ENCODE measurements at regions of chr4 and their contacts with region 1.

Region 1: DNA sequence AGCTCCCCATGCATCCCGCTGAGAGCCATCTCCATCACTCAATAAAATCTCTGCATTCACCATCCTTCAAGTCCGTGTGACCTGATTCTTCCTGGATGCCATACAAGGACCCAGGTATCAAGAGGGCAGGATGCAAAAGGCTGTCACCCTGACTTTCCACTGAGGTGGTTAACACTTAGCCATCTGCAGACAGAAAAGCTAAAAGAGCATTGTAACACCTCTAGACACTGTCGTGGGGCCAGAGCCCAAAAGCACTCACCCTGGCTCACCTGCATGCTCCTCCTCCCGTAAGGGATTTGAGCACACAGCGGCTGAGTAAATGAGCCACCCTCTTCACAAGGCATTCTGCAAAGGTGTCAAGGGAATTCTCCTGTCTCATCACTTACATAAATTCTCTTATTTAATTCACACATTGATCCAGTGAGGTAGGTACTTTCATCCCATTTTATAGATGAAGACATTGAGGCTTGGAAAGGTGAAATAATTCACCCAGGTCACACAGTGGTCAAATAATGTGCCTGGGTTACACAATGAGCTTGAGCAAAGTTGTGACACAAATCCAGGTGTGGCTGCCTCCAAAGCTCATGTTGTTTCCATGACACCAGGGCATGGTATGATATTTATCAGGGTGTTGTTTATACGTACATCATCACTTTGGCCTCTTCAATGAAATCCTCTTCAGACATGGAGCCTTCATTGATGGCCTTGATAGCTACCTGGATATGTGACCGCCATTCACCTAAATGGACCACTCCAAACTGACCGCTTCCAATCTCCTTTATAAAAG is 48.0 kb downstream of the TXK start:
- DNase-seq: no peak
- H3K4me3 Mint-ChIP-seq: no peak overlapping the region
- H3K27ac Mint-ChIP-seq: no peak overlapping the region
- H3K4me1 Mint-ChIP-seq: peaks cover 27% of the 10 kb centered on the region
- H3K27me3 Mint-ChIP-seq: no peaks in the 10 kb centered on the region

Region 2: GRCh38 chr4:47686294-47686872 is 399.6 kb before region 1 on chr4:
- CTCF ChIA-PET with region 1: interaction called, 4 read pairs
- intact Hi-C with region 1: loop called (anchors 5 kb)
- DNase-seq: peak; percentile 85
- H3K4me3 Mint-ChIP-seq: no peak overlapping the region
- H3K27ac Mint-ChIP-seq: no peak overlapping the region
- H3K4me1 Mint-ChIP-seq: no peaks in the 10 kb centered on the region
- H3K27me3 Mint-ChIP-seq: peaks cover 4% of the 10 kb centered on the region

Region 3: GRCh38 chr4:47926639-47927258 is 159.3 kb before region 1 on chr4:
- CTCF ChIA-PET with region 1: interaction called, 8 read pairs
- intact Hi-C with region 1: loop called (anchors 1 kb)
- DNase-seq: peak; percentile 74
- H3K4me3 Mint-ChIP-seq: peak overlapping the region; percentile 63
- H3K27ac Mint-ChIP-seq: no peak overlapping the region
- H3K4me1 Mint-ChIP-seq: peaks cover 8% of the 10 kb centered on the region
- H3K27me3 Mint-ChIP-seq: peaks cover 11% of the 10 kb centered on the region

Region 4: GRCh38 chr4:48008021-48008596 is 77.9 kb before region 1 on chr4:
- CTCF ChIA-PET with region 1: interaction called, 47 read pairs
- intact Hi-C with region 1: loop called (anchors 1 kb)
- DNase-seq: no peak
- H3K4me3 Mint-ChIP-seq: no peak overlapping the region
- H3K27ac Mint-ChIP-seq: no peak overlapping the region
- H3K4me1 Mint-ChIP-seq: no peaks in the 10 kb centered on the region
- H3K27me3 Mint-ChIP-seq: no peaks in the 10 kb centered on the region

Region 5: GRCh38 chr4:48047421-48047844 is 38.6 kb before region 1 on chr4:
- CTCF ChIA-PET with region 1: interaction called, 30 read pairs
- intact Hi-C with region 1: no loop called
- DNase-seq: peak; percentile 91
- H3K4me3 Mint-ChIP-seq: peak overlapping the region; percentile 1
- H3K27ac Mint-ChIP-seq: no peak overlapping the region
- H3K4me1 Mint-ChIP-seq: peaks cover 58% of the 10 kb centered on the region
- H3K27me3 Mint-ChIP-seq: no peaks in the 10 kb centered on the region

Region 6: GRCh38 chr4:48109413-48110263 is 23.6 kb after region 1 on chr4:
- CTCF ChIA-PET with region 1: interaction called, 13 read pairs
- intact Hi-C with region 1: no loop called
- DNase-seq: no peak
- H3K4me3 Mint-ChIP-seq: no peak overlapping the region
- H3K27ac Mint-ChIP-seq: peak overlapping the region; percentile 75
- H3K4me1 Mint-ChIP-seq: peaks cover 63% of the 10 kb centered on the region
- H3K27me3 Mint-ChIP-seq: no peaks in the 10 kb centered on the region